PC-3 (cell line): ENCODE measurements at regions of chr1 and their contacts with region 1.

Region 1: DNA sequence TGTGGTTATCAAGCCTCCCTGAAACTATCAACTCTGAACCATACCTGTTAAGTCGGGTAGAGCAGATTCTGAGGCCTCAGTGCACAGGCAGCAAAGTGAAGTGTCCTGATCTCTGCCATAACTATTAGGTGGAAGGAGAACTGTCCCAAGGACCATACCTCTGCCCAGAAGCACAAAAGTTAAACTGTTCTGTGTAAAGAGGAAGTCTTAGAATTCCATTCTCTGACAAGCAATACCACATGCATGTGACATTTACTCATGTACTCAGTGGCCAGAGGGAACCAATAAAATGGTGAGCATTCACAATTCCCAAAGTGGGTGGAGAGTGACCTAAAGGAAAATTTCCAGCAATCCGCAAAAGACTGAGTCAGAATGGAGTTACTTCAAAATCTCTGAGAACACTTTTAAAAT is 61.0 kb downstream of the TOR3A start:
- DNase-seq: peak; percentile 92
- ATAC-seq: peak; percentile 84
- H3K4me3 ChIP-seq: peak overlapping the region; percentile 79
- H3K27ac ChIP-seq: peak overlapping the region; percentile 97
- H3K4me1 ChIP-seq: peaks cover 28% of the 10 kb centered on the region
- H3K27me3 ChIP-seq: no peaks in the 10 kb centered on the region
- CTCF ChIP-seq: no peak

Region 2: DNA sequence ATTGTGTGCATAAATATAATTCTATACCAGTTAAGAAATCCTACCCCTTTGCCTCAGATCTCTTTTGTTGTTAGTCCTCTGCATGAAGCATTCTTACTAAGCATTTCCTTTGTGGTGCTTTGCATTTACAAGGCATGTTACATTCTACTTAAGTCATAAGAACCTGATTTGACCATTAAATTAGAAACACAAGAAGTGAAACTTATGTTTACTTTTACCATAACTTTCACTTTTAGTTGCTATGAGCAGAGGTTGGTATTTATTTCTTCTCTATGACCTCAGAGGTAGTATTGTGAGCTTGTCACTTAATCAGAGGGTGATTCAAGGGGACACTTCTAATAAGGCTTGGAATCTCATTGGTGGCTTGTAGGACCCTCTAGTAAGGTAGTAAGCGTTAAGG is 108.2 kb before region 1 on chr1:
- CTCF ChIA-PET with region 1: no interaction called
- POLR2A ChIA-PET with region 1: no interaction called
- intact Hi-C with region 1: loop called (anchors 5 kb)
- DNase-seq: peak; percentile 48
- ATAC-seq: peak; percentile 34
- H3K4me3 ChIP-seq: no peak overlapping the region; the same call in 1 of the 2 replicates
- H3K27ac ChIP-seq: peak overlapping the region; percentile 55
- H3K4me1 ChIP-seq: peaks cover 76% of the 10 kb centered on the region
- H3K27me3 ChIP-seq: no peaks in the 10 kb centered on the region
- CTCF ChIP-seq: no peak

Region 3: DNA sequence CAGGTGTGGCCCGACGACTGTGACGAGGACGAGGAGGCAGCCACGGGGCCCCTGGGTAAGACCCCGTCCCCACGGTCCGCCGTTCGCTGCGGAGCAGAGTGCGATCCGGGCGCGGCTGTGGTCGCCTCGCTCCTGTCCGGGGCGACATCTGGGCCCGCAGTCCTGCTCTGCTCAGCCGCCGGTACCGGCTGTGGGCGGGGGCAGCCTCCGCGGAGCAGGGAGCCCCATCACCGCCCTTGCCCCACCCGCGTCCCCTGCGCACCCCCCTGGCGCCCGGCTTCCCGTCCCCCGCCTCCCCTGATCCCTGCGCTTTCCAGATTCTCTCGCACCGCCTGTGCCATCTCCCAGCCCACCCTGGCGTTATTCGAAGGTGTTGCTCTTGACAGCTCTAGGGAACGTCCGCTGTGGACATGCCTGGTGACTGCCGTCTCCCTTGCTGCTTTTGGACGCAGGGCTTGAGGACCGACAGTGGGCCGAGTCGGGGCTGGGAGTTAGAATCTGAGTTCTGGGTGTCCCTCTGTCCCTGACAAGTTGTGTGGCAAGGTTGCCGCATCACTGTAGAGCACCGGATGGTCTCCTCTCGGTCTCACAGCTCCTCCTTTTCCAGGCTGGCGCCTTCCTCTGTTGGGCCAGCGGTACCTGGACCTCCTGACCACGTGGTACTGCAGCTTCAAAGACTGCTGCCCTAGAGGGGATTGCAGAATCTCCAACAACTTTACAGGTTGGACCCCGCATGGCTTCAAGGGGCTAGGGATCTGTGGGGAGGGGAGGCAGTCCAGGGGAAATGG is 60.4 kb before region 1 on chr1:
- CTCF ChIA-PET with region 1: no interaction called
- POLR2A ChIA-PET with region 1: no interaction called
- intact Hi-C with region 1: no loop called
- DNase-seq: peak; percentile 31
- ATAC-seq: peak; percentile 29
- H3K4me3 ChIP-seq: peak overlapping the region; percentile 84
- H3K27ac ChIP-seq: peak overlapping the region; percentile 41
- H3K4me1 ChIP-seq: peaks cover 17% of the 10 kb centered on the region
- H3K27me3 ChIP-seq: no peaks in the 10 kb centered on the region
- CTCF ChIP-seq: no peak

Region 4: GRCh38 chr1:179121159-179121938 is 21.5 kb before region 1 on chr1:
- CTCF ChIA-PET with region 1: no interaction called
- POLR2A ChIA-PET with region 1: no interaction called
- intact Hi-C with region 1: loop called (anchors 1 kb)
- DNase-seq: peak; percentile 68
- ATAC-seq: peak; percentile 12; the same call in 1 of the 2 replicates
- H3K4me3 ChIP-seq: no peak overlapping the region
- H3K27ac ChIP-seq: 0 out of 2 replicates have a peak overlapping the region, but pooled peaks have one; percentile 27
- H3K4me1 ChIP-seq: peaks cover 23% of the 10 kb centered on the region
- H3K27me3 ChIP-seq: no peaks in the 10 kb centered on the region
- CTCF ChIP-seq: peak; percentile 73

Region 5: DNA sequence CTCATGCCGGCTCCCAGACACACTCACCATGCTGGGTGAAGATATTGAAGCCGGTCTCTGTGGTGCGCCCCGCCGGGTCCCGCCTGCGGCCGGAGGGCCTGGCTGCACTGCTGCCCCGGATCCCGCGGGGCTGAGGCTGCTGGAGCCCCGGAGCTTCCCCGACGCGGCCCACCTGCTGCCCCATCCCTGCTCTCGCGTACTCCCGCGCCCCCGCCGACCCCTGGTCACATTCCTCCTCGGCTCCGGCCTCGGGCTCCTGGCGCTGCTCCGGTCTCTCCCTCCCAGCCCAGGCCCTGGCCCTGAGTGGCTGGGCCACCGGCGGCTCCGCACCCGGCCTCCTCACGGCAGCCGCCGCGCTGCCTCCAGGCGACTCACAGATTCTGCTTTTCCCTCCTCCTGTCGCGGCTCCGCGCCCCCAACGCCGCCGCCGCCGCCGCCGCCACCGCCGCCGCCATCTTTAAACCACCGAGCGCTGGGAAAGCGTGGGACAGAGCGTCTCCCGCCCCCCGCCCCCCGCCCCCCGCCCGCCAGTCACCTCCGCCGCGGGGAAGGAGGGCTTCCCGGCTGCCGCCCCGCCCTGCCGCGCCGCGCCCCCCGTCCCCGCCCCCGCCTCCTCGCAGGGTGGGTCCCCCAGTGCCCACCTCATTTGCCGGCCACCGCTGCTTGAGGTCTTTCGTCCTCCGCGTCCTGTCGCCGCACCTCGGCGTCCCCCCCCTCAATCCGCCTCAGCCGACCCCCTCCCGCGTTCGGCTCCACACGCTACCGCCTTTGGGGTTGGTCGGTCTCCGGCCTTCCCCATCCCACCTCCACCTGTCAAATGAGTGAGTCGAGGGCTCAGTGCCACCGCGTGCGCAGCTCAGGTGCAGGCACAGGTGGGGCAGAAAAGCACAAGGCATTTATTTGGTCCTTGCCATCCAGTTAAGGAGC is 86.6 kb after region 1 on chr1 and contains the start of gene ABL2:
- CTCF ChIA-PET with region 1: no interaction called
- POLR2A ChIA-PET with region 1: no interaction called
- intact Hi-C with region 1: loop called (anchors 5 kb)
- DNase-seq: peak; percentile 44
- ATAC-seq: peak; percentile 47
- H3K4me3 ChIP-seq: peak within 1 kb of the TSS; percentile 94
- H3K27ac ChIP-seq: peak within 1 kb of the TSS; percentile 83
- H3K4me1 ChIP-seq: peaks cover 33% of the 10 kb centered on the region
- H3K27me3 ChIP-seq: no peaks in the 10 kb centered on the region
- CTCF ChIP-seq: no peak
- total RNA-seq, gene ABL2: 15.9 and 19.2 TPM in 2 replicates